Natural killer cell (primary cell): ENCODE measurements at regions of chr15 and their contacts with region 1.

Region 1: GRCh38 chr15:64809649-64810496 is 15.6 kb downstream of the PIF1 start:
- DNase-seq: peak; percentile 65 to 83
- ATAC-seq: peak; percentile 76 to 86 (median 85)
- H3K4me3 ChIP-seq: no peak overlapping the region
- H3K4me3 Mint-ChIP-seq: no peak overlapping the region
- H3K27ac ChIP-seq: no peak overlapping the region
- H3K27ac Mint-ChIP-seq: peak overlapping the region in 1 of 2 donors; percentile 29
- H3K4me1 ChIP-seq: no peaks in the 10 kb centered on the region
- H3K4me1 Mint-ChIP-seq: peaks cover 0 to 7% of the 10 kb centered on the region in 2 donors
- H3K27me3 ChIP-seq: no peaks in the 10 kb centered on the region
- H3K27me3 Mint-ChIP-seq: no peaks in the 10 kb centered on the region
- CTCF ChIP-seq: peak; percentile 90

Region 2: GRCh38 chr15:64767203-64767602 is 42.7 kb before region 1 on chr15:
- intact Hi-C with region 1: loop called (anchors 10 kb)
- DNase-seq: peak; percentile 24 to 39
- ATAC-seq: peak in 2 of 3 donors; percentile 44 to 46
- H3K4me3 ChIP-seq: no peak overlapping the region
- H3K4me3 Mint-ChIP-seq: peak overlapping the region; percentile 17
- H3K27ac ChIP-seq: no peak overlapping the region
- H3K27ac Mint-ChIP-seq: peak overlapping the region in 1 of 2 donors; percentile 74
- H3K4me1 ChIP-seq: no peaks in the 10 kb centered on the region
- H3K4me1 Mint-ChIP-seq: peaks cover 18 to 30% of the 10 kb centered on the region in 2 donors
- H3K27me3 ChIP-seq: no peaks in the 10 kb centered on the region
- H3K27me3 Mint-ChIP-seq: no peaks in the 10 kb centered on the region
- CTCF ChIP-seq: no peak

Region 3: GRCh38 chr15:65028921-65029735 is 219.3 kb after region 1 on chr15 and contains the start of gene MTFMT:
- intact Hi-C with region 1: no loop called
- DNase-seq: peak; percentile 87 to 94
- ATAC-seq: peak; percentile 97
- H3K4me3 ChIP-seq: peak within 1 kb of the TSS; percentile 79
- H3K4me3 Mint-ChIP-seq: peak within 1 kb of the TSS; percentile 91
- H3K27ac ChIP-seq: peak within 1 kb of the TSS; percentile 49
- H3K27ac Mint-ChIP-seq: peak within 1 kb of the TSS; percentile 16 to 79
- H3K4me1 ChIP-seq: peaks cover 20% of the 10 kb centered on the region
- H3K4me1 Mint-ChIP-seq: peaks cover 13 to 20% of the 10 kb centered on the region in 2 donors
- H3K27me3 ChIP-seq: peaks cover 4% of the 10 kb centered on the region
- H3K27me3 Mint-ChIP-seq: peaks cover 0 to 13% of the 10 kb centered on the region in 2 donors
- CTCF ChIP-seq: no peak
- total RNA-seq, gene MTFMT: 9.3 to 13.6 (median 12.2) TPM